GM18951 (cell line): ENCODE measurements at regions of chr5 and their contacts with region 1.

Region 1: DNA sequence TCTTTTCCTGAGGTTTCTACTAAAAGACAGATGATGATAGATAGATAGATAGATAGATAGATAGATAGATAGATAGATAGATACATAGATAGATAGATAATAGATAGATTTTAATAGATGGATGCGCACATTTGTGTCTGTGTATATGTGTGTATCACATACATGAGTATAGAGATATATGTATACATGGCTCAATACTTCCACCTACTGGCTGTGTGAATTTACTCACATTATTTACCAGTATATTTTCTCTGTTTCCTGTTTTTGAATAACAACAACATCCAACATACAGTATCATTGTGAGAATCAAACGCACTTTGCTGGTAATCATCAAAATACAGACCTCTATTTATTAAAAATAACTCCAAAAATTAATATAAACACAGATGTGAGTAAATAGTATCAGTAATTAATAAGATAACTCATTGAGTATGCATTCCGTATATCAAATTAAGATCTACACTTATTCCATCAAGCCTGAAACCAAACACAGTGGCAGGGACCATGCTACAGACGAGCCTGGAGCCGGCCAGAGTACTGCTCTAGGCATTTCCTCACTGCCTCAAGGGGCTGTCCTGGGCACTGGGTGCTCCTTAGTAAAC is 338.0 kb downstream of the SEMA5A start:
- POLR2A ChIP-seq: no peak

Region 2: GRCh38 chr5:7927466-7928375 is 1280.2 kb before region 1 on chr5:
- in situ Hi-C with region 1: loop called (anchors 25 kb)
- POLR2A ChIP-seq: no peak

Region 3: DNA sequence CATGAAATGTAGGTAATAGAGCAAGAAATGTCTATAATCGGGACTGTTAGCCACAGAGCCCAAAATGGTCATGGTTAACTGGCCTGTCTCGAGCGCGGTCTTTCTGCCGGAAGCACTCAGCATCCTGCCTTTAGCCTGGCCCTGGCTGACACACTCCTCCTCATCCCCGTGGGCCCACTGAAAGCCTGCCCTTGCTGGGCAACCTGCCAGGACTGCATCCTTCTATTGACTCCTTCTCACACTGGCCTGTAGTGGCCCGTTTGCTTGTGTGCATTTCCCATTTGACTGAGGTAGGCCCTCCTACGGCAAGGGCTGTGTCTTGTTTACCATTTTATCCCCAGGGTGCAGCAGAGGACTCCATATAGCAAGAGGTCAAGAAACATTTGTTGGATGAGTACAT is 826.1 kb after region 1 on chr5:
- in situ Hi-C with region 1: no loop called
- POLR2A ChIP-seq: no peak